ENCODE measurements at regions of chr16 and their contacts with region 1.

Region 1: DNA sequence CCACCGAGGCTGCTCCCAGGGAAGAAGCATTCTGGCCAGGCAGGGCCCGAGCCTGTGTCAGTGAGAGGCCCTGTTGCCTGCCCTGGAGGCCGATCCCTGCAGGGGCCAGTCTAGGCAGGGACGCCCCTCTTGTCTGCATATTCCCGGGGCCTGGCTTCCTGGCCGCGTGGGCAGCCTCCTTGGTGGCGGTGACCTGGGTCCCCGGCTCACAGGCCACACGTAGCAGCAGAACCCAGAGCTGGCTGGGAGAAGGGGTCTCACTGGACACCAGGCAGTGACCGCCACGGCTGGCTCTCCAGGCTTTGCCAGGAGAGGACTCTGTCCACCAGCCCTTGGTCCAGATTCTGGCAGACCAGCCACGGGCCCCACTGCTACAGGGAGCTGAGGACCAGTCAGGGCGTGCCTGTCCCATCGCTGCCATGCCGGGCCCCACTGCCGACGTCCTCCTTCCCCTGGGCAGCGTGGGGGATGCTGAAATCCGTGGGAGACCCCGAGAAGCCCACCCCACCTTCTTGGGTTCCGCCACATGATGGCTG is 3.7 kb upstream of the CACNA1H start:
- DNase-seq: no peak
- ATAC-seq: no peak

Region 2: GRCh38 chr16:1109648-1110047 is 39.5 kb before region 1 on chr16:
- intact Hi-C with region 1: loop called in 1 of 2 experiments (anchors 2 kb)
- DNase-seq: no peak
- ATAC-seq: peak; percentile 35

Region 3: DNA sequence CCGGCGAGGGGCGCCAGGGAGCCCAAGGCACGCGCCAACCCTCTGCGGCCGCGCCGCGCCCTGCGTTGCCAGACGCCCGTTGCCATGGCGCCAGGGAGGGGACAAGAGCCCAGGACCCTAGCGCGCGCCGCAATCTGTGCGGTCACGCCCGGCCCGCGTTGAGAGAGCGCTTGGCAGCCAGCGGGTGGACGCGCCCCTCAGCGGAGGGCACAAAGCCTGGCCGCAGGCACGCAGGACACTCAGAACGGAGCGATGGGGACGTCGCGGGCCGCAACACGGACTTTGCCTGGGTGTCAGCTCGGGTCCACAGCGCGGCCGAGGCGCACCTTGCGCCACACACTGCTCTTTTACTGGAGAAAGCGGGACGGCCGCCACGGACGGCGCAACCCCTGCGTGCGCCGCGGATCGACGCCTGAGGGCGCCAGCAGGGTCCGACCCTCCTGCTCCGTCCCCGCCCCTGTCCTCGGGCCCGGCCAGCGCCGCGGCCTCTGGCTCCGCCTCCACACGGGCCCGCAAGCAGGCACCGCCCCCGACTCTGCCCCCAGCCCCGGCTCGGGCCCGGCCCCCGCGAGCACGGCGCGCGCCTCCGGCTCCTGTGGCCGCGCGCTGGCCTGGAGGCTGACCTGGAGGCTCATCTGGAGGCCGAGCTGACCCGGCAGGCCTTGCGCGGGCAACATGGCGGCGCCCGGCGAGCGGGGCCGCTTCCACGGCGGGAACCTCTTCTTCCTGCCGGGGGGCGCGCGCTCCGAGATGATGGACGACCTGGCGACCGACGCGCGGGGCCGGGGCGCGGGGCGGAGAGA is 834.6 kb after region 1 on chr16 and contains the start of gene GFER:
- intact Hi-C with region 1: no loop called
- DNase-seq: peak; percentile 90 to 92
- ATAC-seq: peak; percentile 51
- total RNA-seq, gene GFER: 73.7 to 82.3 TPM